Activated B cell treated with CpG ODN at 0.5 μM for 24 hours (primary cell): ENCODE measurements at regions of chr10 and their contacts with region 1.

Region 1: GRCh38 chr10:72273410-72274212 is at the start of gene DDIT4:
- DNase-seq: peak; percentile 95
- ATAC-seq: peak; percentile 93
- H3K4me3 Mint-ChIP-seq: peak within 1 kb of the TSS; percentile 98
- H3K27ac Mint-ChIP-seq: peak within 1 kb of the TSS; percentile 94
- H3K4me1 Mint-ChIP-seq: peaks cover 40% of the 10 kb centered on the region
- H3K27me3 Mint-ChIP-seq: no peaks in the 10 kb centered on the region
- CTCF ChIP-seq: no peak
- total RNA-seq, gene DDIT4: 175 and 180 TPM in 2 replicates

Region 2: GRCh38 chr10:72162978-72163377 is 110.6 kb before region 1 on chr10:
- CTCF ChIA-PET with region 1: no interaction called
- POLR2A ChIA-PET with region 1: no interaction called
- intact Hi-C with region 1: no loop called
- DNase-seq: no peak
- ATAC-seq: peak; percentile 28
- H3K4me3 Mint-ChIP-seq: no peak overlapping the region
- H3K27ac Mint-ChIP-seq: no peak overlapping the region
- H3K4me1 Mint-ChIP-seq: peaks cover 5% of the 10 kb centered on the region
- H3K27me3 Mint-ChIP-seq: no peaks in the 10 kb centered on the region
- CTCF ChIP-seq: no peak

Region 3: DNA sequence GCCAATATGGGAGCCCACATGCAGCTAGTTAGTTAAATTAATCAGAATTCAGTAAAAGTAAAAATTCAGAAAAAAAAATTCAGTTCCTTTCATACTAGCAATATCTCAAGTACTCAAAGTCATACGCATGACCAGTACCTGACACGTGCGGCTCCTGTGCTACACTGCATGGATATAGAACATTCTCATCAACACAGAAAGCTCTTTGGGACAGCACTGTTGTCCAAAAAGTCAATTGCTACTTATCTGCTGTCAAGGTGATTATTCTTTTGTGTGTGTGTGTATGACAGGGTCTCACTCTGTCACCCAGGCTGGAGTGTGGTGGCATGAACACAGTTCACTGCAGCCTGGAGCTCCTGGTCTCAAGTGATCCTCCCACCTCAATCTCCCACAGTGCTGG is 72.7 kb before region 1 on chr10:
- CTCF ChIA-PET with region 1: no interaction called
- POLR2A ChIA-PET with region 1: no interaction called
- intact Hi-C with region 1: no loop called
- DNase-seq: no peak
- ATAC-seq: no peak
- H3K4me3 Mint-ChIP-seq: no peak overlapping the region
- H3K27ac Mint-ChIP-seq: no peak overlapping the region
- H3K4me1 Mint-ChIP-seq: no peaks in the 10 kb centered on the region
- H3K27me3 Mint-ChIP-seq: no peaks in the 10 kb centered on the region
- CTCF ChIP-seq: no peak

Region 4: DNA sequence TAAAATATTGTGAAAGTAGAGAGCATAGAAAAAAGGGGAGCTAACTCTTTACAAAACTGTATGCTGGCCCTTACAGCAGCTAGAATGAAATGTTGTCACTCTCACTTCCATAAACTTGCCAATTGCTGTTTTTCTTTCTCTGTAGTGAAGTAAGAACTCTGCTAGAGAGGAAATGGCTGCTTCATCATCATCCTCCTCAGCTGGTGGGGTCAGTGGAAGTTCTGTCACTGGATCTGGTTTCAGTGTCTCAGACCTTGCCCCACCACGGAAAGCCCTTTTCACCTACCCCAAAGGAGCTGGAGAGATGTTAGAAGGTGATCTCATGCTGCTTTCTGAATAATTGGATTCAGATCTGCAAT is 49.9 kb before region 1 on chr10:
- CTCF ChIA-PET with region 1: interaction called, 12 read pairs
- POLR2A ChIA-PET with region 1: interaction called, 172 read pairs
- intact Hi-C with region 1: loop called (anchors 1 kb)
- DNase-seq: no peak
- ATAC-seq: peak; percentile 47
- H3K4me3 Mint-ChIP-seq: peak overlapping the region; percentile 59
- H3K27ac Mint-ChIP-seq: peak overlapping the region; percentile 84
- H3K4me1 Mint-ChIP-seq: peaks cover 67% of the 10 kb centered on the region
- H3K27me3 Mint-ChIP-seq: no peaks in the 10 kb centered on the region
- CTCF ChIP-seq: no peak

Region 5: GRCh38 chr10:72260588-72261322 is 12.9 kb before region 1 on chr10:
- CTCF ChIA-PET with region 1: interaction called, 16 read pairs
- POLR2A ChIA-PET with region 1: interaction called, 380 read pairs
- intact Hi-C with region 1: loop called (anchors 1 kb)
- DNase-seq: peak; percentile 70
- ATAC-seq: peak; percentile 71
- H3K4me3 Mint-ChIP-seq: peak overlapping the region; percentile 91
- H3K27ac Mint-ChIP-seq: peak overlapping the region; percentile 96
- H3K4me1 Mint-ChIP-seq: peaks cover 58% of the 10 kb centered on the region
- H3K27me3 Mint-ChIP-seq: no peaks in the 10 kb centered on the region
- CTCF ChIP-seq: no peak

Region 6: DNA sequence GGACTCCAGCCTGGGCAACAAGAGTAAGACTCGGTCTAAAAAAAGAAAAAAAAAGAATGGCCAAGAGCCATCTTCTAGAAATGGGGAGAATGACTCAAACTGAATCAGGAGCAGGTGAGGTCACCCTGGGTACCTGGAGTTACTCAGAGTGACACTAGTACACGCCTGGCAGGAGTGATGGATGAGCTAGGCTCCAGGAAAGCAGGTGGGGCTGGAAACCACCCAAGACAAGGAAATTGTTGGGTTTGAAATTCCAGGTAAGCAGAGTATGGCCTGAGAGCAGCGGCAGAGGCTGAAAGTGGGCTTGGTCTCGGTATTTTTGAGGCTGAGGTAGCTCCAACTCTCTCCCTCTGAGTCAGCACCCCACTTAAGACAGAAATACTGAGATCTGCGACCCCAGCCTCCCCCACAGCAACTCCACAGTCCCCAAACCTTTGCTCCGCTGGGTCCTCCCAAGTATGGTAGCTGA is 18.6 kb after region 1 on chr10:
- CTCF ChIA-PET with region 1: interaction called, 21 read pairs
- POLR2A ChIA-PET with region 1: interaction called, 377 read pairs
- intact Hi-C with region 1: loop called (anchors 1 kb)
- DNase-seq: no peak
- ATAC-seq: no peak
- H3K4me3 Mint-ChIP-seq: no peak overlapping the region
- H3K27ac Mint-ChIP-seq: peak overlapping the region; percentile 79
- H3K4me1 Mint-ChIP-seq: peaks cover 53% of the 10 kb centered on the region
- H3K27me3 Mint-ChIP-seq: no peaks in the 10 kb centered on the region
- CTCF ChIP-seq: no peak